Natural killer cell (primary cell): ENCODE measurements at regions of chr1 and their contacts with region 1.

Region 1: GRCh38 chr1:116485071-116485735 is 85.6 kb downstream of the CD58 start:
- DNase-seq: peak; percentile 82 to 93
- ATAC-seq: peak; percentile 88 to 98 (median 97)
- H3K4me3 ChIP-seq: no peak overlapping the region
- H3K4me3 Mint-ChIP-seq: no peak overlapping the region
- H3K27ac ChIP-seq: no peak overlapping the region
- H3K27ac Mint-ChIP-seq: no peak overlapping the region
- H3K4me1 ChIP-seq: peaks cover 5% of the 10 kb centered on the region
- H3K4me1 Mint-ChIP-seq: peaks cover under 1 to 6% of the 10 kb centered on the region in 2 donors
- H3K27me3 ChIP-seq: no peaks in the 10 kb centered on the region
- H3K27me3 Mint-ChIP-seq: no peaks in the 10 kb centered on the region
- CTCF ChIP-seq: peak; percentile 95

Region 2: DNA sequence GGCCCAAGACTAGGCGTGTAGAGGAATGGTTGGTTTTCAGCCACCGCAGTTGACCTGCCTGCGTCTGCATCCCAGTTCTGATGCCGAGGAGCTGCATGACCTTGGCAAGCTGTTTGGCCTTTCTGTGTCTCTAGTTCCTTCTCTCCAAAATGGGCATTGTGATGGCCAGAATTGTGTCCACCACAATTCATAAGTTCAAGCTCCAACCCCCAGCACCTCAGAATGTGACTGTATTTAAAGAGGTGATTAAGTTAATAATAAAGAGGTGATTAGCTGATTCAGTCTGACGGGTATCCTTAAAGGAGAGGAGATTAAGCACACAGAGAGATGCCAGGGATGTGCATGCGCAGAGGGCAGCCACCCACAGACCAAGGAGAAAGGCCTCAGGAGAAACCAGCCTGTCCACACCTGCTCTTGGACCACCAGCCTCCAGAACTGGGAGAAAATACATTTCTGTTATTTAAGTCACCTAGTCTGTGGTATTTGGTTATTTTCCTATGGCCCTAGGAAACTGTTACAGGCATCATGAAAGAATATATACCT is 345.5 kb before region 1 on chr1:
- intact Hi-C with region 1: loop called (anchors 1 kb)
- DNase-seq: no peak
- ATAC-seq: no peak
- H3K4me3 ChIP-seq: no peak overlapping the region
- H3K4me3 Mint-ChIP-seq: no peak overlapping the region
- H3K27ac ChIP-seq: no peak overlapping the region
- H3K27ac Mint-ChIP-seq: no peak overlapping the region
- H3K4me1 ChIP-seq: peaks cover 8% of the 10 kb centered on the region
- H3K4me1 Mint-ChIP-seq: peaks cover 0 to 6% of the 10 kb centered on the region in 2 donors
- H3K27me3 ChIP-seq: peaks cover 6% of the 10 kb centered on the region
- H3K27me3 Mint-ChIP-seq: peaks cover 12 to 18% of the 10 kb centered on the region in 2 donors
- CTCF ChIP-seq: no peak

Region 3: DNA sequence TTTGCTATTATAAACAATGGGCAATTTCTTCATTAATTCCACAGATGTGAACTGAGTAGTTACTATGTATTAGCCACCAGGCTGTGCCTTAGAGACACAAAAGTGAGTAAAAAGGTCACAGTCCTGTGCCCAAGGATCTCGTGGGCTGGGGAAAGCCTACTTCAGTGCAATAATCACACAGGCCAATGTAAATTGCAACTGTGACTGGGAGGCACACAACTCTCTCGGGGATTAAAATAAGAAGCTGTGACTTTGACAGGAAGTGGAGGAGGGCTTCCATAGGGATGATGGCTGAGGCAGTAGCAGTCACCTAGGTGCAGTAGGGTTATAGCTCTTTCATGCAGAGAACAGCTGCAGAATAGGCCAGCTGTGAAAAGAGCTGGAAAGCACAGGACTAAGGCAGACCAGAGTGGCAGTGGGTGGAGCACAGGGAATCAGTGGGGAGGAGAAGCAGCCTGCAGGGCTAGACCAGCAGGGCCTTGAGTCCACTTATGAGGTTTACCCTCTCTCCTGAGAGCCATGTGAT is 252.2 kb before region 1 on chr1:
- intact Hi-C with region 1: loop called (anchors 2 kb)
- DNase-seq: peak in 1 of 2 donors; percentile 69
- ATAC-seq: peak; percentile 30 to 53 (median 50)
- H3K4me3 ChIP-seq: no peak overlapping the region
- H3K4me3 Mint-ChIP-seq: no peak overlapping the region
- H3K27ac ChIP-seq: no peak overlapping the region
- H3K27ac Mint-ChIP-seq: no peak overlapping the region
- H3K4me1 ChIP-seq: no peaks in the 10 kb centered on the region
- H3K4me1 Mint-ChIP-seq: peaks cover 5 to 7% of the 10 kb centered on the region in 2 donors
- H3K27me3 ChIP-seq: no peaks in the 10 kb centered on the region
- H3K27me3 Mint-ChIP-seq: peaks cover 16 to 22% of the 10 kb centered on the region in 2 donors
- CTCF ChIP-seq: no peak

Region 4: GRCh38 chr1:116360429-116361173 is 124.6 kb before region 1 on chr1:
- intact Hi-C with region 1: loop called (anchors 2 kb)
- DNase-seq: peak in 1 of 2 donors; percentile 62
- ATAC-seq: no peak
- H3K4me3 ChIP-seq: no peak overlapping the region
- H3K4me3 Mint-ChIP-seq: no peak overlapping the region
- H3K27ac ChIP-seq: no peak overlapping the region
- H3K27ac Mint-ChIP-seq: no peak overlapping the region
- H3K4me1 ChIP-seq: no peaks in the 10 kb centered on the region
- H3K4me1 Mint-ChIP-seq: no peaks in the 10 kb centered on the region
- H3K27me3 ChIP-seq: no peaks in the 10 kb centered on the region
- H3K27me3 Mint-ChIP-seq: peaks cover 0 to 9% of the 10 kb centered on the region in 2 donors
- CTCF ChIP-seq: peak; percentile 26

Region 5: DNA sequence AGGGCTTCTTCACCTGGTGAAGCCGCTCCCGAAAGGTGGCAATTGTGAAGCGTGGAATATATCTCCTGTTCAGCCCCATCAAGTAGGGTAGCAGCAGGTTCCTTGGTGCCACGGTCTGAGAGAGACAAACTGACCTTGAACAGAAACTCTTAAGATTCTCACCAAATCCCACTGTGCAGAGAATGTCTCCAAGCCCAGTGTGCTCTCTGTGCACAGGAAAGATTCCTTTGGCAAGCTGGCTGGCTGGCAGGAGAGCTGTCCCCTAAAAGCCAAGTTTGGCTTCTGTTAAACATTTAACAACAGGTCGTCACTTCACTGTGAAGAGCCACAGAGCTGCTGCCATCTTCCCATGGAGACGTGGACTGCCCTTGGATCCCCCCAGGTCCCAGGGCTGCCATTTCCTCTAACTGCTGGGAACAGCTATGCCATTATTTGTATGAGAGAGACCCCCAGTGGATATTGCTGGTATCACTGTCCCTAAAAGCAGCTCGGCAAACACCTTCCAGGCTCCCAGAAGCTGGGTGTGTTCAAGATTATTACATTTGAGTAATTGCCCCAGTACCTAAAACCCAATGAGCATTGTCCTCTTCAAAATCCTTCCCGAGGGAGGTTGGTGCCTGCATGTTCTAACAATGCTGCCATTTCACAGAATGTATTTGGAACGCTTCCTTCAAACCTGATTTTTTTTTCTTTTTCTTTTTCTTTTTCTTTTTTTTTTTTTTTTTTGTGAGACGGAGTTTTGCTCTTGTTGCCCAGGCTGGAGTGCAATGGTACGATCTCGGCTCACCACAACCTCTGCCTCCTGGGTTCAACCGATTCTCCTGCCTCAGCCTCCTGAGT is 13.8 kb after region 1 on chr1:
- intact Hi-C with region 1: loop called (anchors 1 kb)
- DNase-seq: peak; percentile 40 to 79
- ATAC-seq: peak; percentile 64 to 73 (median 70)
- H3K4me3 ChIP-seq: no peak overlapping the region
- H3K4me3 Mint-ChIP-seq: no peak overlapping the region
- H3K27ac ChIP-seq: no peak overlapping the region
- H3K27ac Mint-ChIP-seq: peak overlapping the region; percentile 23 to 73
- H3K4me1 ChIP-seq: peaks cover 39% of the 10 kb centered on the region
- H3K4me1 Mint-ChIP-seq: peaks cover 46 to 59% of the 10 kb centered on the region in 2 donors
- H3K27me3 ChIP-seq: no peaks in the 10 kb centered on the region
- H3K27me3 Mint-ChIP-seq: no peaks in the 10 kb centered on the region
- CTCF ChIP-seq: peak; percentile 79

Region 6: DNA sequence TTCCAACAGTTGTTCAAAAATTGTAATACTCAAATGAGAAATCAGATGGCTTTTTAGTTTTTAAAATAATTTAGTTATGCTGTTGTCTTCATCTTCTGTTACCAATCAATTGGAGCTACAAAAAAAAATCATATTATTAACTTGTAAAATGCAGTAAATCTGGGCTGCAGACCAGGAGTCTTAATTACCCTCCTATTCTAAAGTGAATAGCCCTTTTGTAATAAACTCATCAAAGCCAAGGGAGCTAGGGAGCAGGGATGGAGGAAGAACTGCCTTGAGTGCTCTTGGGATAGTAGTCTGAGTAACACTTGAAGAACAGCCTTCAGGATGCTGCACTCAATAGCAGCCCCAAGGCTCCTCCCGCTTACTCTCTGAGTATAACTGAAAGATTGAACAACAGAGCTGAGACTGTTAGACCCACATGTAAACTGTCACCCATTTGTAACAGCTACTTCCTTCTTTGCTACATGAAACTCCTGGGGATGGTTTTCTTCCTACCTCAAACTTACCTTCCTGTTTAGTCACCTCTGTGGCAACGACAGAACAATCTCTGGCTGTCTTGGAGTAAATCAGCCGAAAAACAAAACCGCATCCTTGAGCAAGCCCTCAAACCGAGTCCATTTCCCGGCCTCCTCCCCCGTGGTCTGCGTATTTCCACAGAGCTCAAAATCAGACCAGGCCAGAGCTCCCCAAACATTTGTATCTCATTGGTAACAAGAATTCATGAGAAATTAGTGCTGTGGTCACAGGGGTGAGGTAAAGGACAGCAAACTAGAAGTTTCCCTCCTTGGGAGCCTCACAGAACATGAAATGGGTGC is 29.7 kb after region 1 on chr1:
- intact Hi-C with region 1: no loop called
- DNase-seq: peak; percentile 54 to 83
- ATAC-seq: peak; percentile 75 to 86 (median 76)
- H3K4me3 ChIP-seq: no peak overlapping the region
- H3K4me3 Mint-ChIP-seq: peak overlapping the region; percentile 82
- H3K27ac ChIP-seq: peak overlapping the region; percentile 88
- H3K27ac Mint-ChIP-seq: peak overlapping the region; percentile 99 to 100
- H3K4me1 ChIP-seq: peaks cover 54% of the 10 kb centered on the region
- H3K4me1 Mint-ChIP-seq: peaks cover 68 to 69% of the 10 kb centered on the region in 2 donors
- H3K27me3 ChIP-seq: no peaks in the 10 kb centered on the region
- H3K27me3 Mint-ChIP-seq: no peaks in the 10 kb centered on the region
- CTCF ChIP-seq: no peak